ENCODE measurements at regions of chr16 and their contacts with region 1.

Region 1: DNA sequence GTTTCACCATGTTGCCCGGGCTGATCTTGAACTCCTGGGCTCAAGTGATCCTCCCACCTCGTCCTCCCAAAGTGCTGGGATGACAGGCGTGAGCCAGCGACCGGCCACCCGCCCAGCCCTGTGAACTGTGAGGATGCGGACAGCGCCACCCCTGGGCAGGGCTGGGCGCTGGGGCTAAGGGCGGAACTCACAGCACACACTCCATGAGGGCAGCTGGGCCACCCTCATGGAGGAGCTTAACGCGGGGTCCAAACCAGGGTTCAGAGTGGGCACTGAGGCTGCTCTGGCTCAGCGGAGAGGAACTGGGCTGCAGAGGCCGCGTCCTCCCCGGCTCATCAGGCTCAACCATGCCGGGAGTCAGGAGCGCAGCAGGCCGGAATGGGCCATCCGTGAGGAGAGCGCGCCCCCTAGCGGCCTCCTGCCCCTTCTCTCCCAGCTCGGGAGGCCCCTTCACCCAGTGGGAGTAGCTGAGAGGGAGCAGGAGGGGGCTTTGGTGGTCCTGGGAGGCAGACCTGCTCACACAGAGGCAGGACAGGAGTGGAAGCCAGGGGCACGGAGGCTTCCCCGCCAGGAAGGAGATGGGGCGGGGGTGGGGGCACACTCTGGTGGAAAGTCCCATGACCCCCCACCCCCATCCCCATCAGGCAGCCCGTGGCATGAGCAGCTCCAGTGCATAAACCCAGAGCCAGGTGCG is 13.8 kb downstream of the CORO7 start:
- DNase-seq: peak; percentile 76
- H3K4me3 Mint-ChIP-seq: no peak overlapping the region
- H3K27ac Mint-ChIP-seq: no peak overlapping the region
- H3K4me1 Mint-ChIP-seq: peaks cover 8% of the 10 kb centered on the region
- H3K27me3 Mint-ChIP-seq: no peaks in the 10 kb centered on the region

Region 2: GRCh38 chr16:4373863-4374742 is 28.5 kb before region 1 on chr16:
- CTCF ChIA-PET with region 1: interaction called, 10 read pairs
- DNase-seq: no peak
- H3K4me3 Mint-ChIP-seq: no peak overlapping the region
- H3K27ac Mint-ChIP-seq: peak overlapping the region; percentile 58
- H3K4me1 Mint-ChIP-seq: peaks cover 11% of the 10 kb centered on the region
- H3K27me3 Mint-ChIP-seq: no peaks in the 10 kb centered on the region

Region 3: GRCh38 chr16:4416200-4417032 is 13.8 kb after region 1 on chr16 and contains the start of gene CORO7:
- CTCF ChIA-PET with region 1: interaction called, 38 read pairs
- DNase-seq: peak; percentile 99
- H3K4me3 Mint-ChIP-seq: peak within 1 kb of the TSS; percentile 82
- H3K27ac Mint-ChIP-seq: peak within 1 kb of the TSS; percentile 96
- H3K4me1 Mint-ChIP-seq: peaks cover 44% of the 10 kb centered on the region
- H3K27me3 Mint-ChIP-seq: peaks cover 13% of the 10 kb centered on the region

Region 4: GRCh38 chr16:4593069-4593468 is 190.5 kb after region 1 on chr16:
- CTCF ChIA-PET with region 1: no interaction called
- DNase-seq: no peak
- H3K4me3 Mint-ChIP-seq: no peak overlapping the region
- H3K27ac Mint-ChIP-seq: no peak overlapping the region
- H3K4me1 Mint-ChIP-seq: no peaks in the 10 kb centered on the region
- H3K27me3 Mint-ChIP-seq: peaks cover 29% of the 10 kb centered on the region